ENCODE measurements at regions of chr7 and their contacts with region 1.

Region 1: DNA sequence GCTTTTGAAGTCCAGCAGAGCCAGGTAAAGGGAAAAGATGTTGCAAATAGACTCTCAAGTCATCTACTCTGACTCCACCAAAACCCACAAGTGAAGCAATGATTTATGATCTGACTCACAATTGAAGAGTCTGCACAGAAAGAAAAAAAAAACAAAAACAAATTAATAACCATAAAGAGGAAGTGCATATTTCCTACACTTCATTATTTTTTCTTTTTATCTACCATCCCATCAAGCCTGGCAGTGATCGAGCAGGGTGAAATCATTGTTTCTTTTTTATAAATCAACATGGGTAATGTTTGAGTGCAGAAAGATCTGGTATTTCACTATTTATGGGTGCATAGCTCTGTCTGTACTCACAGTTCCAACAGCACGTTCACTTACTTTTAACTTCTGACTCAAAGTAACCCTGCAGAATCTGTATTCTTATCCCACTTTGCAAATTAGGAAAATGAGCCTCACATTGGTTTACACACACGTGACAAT is 829.0 kb downstream of the TNS3 start:
- DNase-seq: peak; percentile 32 to 96
- H3K4me3 ChIP-seq: peak overlapping the region; percentile 23; the same call in 1 of the 2 replicates
- H3K27ac ChIP-seq: peak overlapping the region; percentile 74
- H3K4me1 ChIP-seq: peaks cover 41% of the 10 kb centered on the region
- H3K27me3 ChIP-seq: no peaks in the 10 kb centered on the region
- CTCF ChIP-seq: no peak

Region 2: DNA sequence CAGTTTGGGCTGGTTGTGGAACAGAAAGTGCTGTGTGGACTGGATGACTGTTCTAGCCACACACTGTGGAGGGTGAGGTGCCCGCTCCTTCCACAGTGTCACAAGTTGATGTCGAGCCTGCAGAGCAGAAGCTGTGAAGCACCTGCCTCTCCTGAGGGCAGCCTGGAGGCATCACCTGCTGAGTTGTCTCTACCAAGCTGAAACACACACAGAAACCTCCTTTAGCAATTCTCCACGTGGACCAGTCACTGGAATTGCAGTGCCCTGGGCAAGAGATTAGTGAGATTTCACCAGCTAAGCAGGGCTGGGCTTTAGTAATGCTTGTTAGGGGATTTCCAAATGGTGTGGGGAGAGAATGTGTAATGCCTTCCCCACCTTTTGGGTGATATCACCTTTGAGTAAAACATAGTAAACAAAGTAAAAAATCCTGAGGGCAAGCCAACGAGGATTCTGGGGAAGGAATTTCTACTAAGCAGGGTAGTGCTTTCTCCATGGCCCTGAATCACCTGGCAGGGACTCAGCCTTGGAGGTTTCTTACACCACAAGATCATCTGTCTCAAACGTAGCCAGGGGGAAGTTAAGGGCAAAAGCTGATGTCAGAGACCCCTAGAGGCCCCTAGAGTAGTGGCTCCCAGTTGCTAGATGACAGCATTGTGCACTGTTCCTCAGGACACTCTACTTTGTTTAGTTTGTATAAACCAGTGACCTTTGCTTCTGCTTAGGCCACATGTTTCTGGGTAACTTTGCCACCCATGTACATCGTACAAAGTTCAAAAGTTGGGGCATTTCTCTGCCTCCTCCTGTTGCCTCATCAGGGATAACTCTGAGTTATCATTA is 598.8 kb before region 1 on chr7:
- CTCF ChIA-PET with region 1: no interaction called
- POLR2A ChIA-PET with region 1: interaction called, 10 read pairs
- intact Hi-C with region 1: no loop called
- DNase-seq: peak; percentile 55 to 99
- H3K4me3 ChIP-seq: no peak overlapping the region
- H3K27ac ChIP-seq: peak overlapping the region; percentile 91
- H3K4me1 ChIP-seq: peaks cover 37% of the 10 kb centered on the region
- H3K27me3 ChIP-seq: no peaks in the 10 kb centered on the region
- CTCF ChIP-seq: 0 out of 2 replicates have a peak, but pooled peaks have one; percentile 28

Region 3: DNA sequence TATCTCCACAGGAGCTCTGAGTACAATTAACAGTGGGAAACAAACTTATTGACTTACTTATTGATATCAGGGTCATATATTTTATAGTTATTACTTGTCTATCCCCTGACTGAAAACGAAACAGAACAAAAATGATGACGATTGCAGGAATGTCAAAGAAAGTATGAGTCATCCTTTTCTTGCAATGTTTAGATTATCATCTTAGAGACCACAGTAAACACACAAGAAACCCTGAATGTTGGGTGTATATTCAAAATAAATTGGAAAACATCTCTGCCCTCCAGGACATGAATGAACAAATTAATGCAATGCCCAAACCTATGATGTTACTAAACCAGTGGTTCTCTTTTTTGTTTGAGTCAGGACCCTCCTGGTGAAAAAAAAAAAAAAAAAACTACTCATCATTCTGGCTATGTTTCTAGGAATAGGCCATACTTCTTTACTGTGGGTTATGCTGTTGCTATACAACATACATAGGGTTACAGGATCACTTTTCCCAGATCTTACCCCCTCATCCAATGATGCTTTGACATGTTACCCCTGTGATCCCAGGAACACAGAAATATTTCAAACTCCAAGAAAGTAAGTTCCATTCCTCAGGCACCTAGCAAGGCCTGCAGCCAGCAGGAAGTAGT is 208.4 kb before region 1 on chr7:
- CTCF ChIA-PET with region 1: no interaction called
- POLR2A ChIA-PET with region 1: no interaction called
- intact Hi-C with region 1: loop called (anchors 1 kb)
- DNase-seq: peak; percentile 34 to 84
- H3K4me3 ChIP-seq: no peak overlapping the region
- H3K27ac ChIP-seq: peak overlapping the region; percentile 67
- H3K4me1 ChIP-seq: peaks cover 30% of the 10 kb centered on the region
- H3K27me3 ChIP-seq: no peaks in the 10 kb centered on the region
- CTCF ChIP-seq: no peak

Region 4: GRCh38 chr7:46651073-46651472 is 101.9 kb before region 1 on chr7:
- CTCF ChIA-PET with region 1: interaction called, 3 read pairs
- POLR2A ChIA-PET with region 1: no interaction called
- intact Hi-C with region 1: loop called (anchors 1 kb)
- DNase-seq: peak; percentile 79 to 97
- H3K4me3 ChIP-seq: no peak overlapping the region
- H3K27ac ChIP-seq: peak overlapping the region; percentile 96
- H3K4me1 ChIP-seq: peaks cover 35% of the 10 kb centered on the region
- H3K27me3 ChIP-seq: no peaks in the 10 kb centered on the region
- CTCF ChIP-seq: no peak

Region 5: GRCh38 chr7:46908770-46909169 is 155.8 kb after region 1 on chr7:
- CTCF ChIA-PET with region 1: no interaction called
- POLR2A ChIA-PET with region 1: no interaction called
- intact Hi-C with region 1: no loop called
- DNase-seq: peak; percentile 53 to 88
- H3K4me3 ChIP-seq: no peak overlapping the region
- H3K27ac ChIP-seq: no peak overlapping the region
- H3K4me1 ChIP-seq: peaks cover 17% of the 10 kb centered on the region
- H3K27me3 ChIP-seq: no peaks in the 10 kb centered on the region
- CTCF ChIP-seq: no peak

Region 6: GRCh38 chr7:46932676-46933424 is 179.9 kb after region 1 on chr7:
- CTCF ChIA-PET with region 1: no interaction called
- POLR2A ChIA-PET with region 1: no interaction called
- intact Hi-C with region 1: loop called (anchors 5 kb)
- DNase-seq: peak; percentile 21 to 38
- H3K4me3 ChIP-seq: no peak overlapping the region
- H3K27ac ChIP-seq: peak overlapping the region; percentile 22
- H3K4me1 ChIP-seq: peaks cover 42% of the 10 kb centered on the region
- H3K27me3 ChIP-seq: no peaks in the 10 kb centered on the region
- CTCF ChIP-seq: no peak

Region 7: DNA sequence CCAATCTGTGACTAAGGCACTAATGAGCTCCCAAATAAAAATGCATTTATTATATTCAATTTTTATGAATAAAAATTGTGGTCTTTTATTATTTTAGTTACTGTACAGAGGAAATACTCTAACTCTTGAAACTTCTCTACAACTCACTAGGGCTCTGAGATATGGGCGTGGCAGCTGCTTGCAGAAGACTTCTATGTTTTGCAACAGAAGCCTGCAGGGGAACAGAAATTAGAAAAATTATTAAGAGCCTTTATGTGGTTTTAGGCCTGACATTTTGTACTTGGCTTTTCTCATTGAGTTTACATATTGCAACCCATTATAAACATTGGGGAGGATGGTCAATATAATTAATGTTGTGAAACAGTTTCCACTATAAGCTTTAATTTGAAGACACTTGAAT is 247.6 kb after region 1 on chr7:
- CTCF ChIA-PET with region 1: no interaction called
- POLR2A ChIA-PET with region 1: no interaction called
- intact Hi-C with region 1: no loop called
- DNase-seq: no peak
- H3K4me3 ChIP-seq: no peak overlapping the region
- H3K27ac ChIP-seq: no peak overlapping the region
- H3K4me1 ChIP-seq: no peaks in the 10 kb centered on the region
- H3K27me3 ChIP-seq: no peaks in the 10 kb centered on the region
- CTCF ChIP-seq: no peak